Heart right ventricle (tissue), 16 donors: ENCODE measurements at regions of chr16 and their contacts with region 1.

Region 1: DNA sequence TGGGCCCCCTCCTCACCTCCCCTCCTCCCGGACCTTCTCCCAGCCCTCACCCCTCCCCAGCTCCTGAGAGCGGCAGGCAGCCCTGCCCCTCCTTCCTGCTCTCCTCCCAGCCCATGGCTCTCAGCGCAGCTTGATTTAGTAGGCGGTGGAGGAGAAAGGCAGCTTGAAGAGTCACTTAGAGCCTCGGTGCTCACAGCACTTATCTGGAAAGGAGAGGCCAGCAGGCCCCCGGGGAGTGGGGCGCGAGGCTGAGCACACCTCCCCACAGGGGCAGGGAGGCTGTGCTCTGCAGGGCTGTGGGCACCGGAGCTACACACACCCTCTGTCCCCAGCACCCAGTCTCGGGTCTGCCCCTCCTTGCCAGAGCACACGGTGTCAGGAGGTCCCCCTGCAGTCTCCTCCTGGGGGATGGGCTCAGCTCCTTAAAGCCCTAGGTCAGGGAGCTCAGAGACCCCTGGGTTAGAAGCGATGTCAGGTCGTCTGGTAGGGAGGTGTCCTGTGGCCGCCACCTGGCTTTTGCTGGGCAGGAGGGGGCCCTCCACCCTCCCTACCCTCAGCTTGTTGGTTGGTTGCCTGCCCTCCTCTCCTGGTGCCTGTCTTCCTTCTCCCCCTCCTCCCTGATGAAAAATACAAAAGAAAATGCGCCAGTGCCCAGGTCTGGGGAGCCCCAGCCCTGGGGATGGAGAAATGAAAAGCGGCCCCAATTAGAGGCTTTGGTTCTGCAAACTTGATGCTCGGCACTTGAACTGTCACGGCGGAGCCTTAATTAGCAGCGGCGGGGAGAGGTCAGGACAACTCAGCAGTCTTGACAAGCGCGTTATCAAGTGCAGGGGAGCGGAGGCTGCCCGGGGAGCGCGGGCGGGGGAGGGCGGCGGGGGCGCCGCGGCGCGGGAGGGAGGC is 151.1 kb upstream of the GSE1 start:
- DNase-seq: peak; percentile 55 to 71
- ATAC-seq: peak; percentile 30 to 60 (median 42)
- H3K4me3 ChIP-seq: peak overlapping the region in 9 of 10 donors; percentile 16 to 54 (median 43)
- H3K27ac ChIP-seq: peak overlapping the region; percentile 17 to 85 (median 72)
- H3K4me1 ChIP-seq: peaks cover 29 to 77% (median 50%) of the 10 kb centered on the region in 9 donors
- H3K27me3 ChIP-seq: peaks cover 0 to 35% (median 7%) of the 10 kb centered on the region in 7 donors
- CTCF ChIP-seq: no peak

Region 2: DNA sequence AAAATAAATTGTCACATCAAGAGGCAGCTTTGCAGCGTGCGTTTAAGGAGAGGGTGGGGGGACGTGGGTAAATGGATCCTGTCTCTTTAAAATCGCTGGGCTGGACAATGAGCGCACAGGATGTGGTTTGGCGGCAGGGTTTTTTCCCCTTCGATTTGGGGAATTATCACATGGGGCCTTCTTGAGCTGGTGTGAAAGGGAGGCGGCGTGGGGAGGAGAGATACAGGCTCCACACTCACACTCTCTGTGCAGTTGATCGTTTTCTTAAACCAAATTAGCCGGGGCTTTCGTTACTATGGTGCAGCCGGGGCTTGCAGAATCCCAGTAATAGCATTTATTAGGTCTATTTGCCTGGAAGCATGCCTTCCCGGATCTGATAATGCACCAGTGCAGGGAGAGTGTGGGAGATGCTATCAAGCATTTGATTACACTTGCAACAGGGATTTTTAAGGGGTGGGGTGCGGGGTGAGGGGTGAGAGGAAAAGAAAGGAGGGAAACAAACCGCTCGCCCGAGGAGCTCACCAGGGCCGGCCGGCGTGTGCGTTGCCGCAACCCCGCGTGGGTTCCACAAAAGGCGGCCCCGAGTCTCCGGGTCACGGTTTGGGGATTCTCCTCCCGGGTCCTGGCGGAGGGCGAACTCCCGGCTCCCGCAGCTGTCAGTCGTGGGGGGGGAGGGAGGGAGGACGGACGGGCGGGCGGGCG is 92.2 kb after region 1 on chr16:
- intact Hi-C with region 1: loop called in 1 of 10 experiments (anchors 5 kb)
- DNase-seq: peak; percentile 53 to 82
- ATAC-seq: peak; percentile 13 to 67 (median 54)
- H3K4me3 ChIP-seq: peak overlapping the region; percentile 59 to 86 (median 77)
- H3K27ac ChIP-seq: peak overlapping the region; percentile 77 to 96 (median 94)
- H3K4me1 ChIP-seq: peaks cover 4 to 53% (median 41%) of the 10 kb centered on the region in 9 donors
- H3K27me3 ChIP-seq: no peaks in the 10 kb centered on the region
- CTCF ChIP-seq: no peak